Transverse colon (tissue), 4 donors: ENCODE measurements at regions of chr11 and their contacts with region 1.

Region 1: DNA sequence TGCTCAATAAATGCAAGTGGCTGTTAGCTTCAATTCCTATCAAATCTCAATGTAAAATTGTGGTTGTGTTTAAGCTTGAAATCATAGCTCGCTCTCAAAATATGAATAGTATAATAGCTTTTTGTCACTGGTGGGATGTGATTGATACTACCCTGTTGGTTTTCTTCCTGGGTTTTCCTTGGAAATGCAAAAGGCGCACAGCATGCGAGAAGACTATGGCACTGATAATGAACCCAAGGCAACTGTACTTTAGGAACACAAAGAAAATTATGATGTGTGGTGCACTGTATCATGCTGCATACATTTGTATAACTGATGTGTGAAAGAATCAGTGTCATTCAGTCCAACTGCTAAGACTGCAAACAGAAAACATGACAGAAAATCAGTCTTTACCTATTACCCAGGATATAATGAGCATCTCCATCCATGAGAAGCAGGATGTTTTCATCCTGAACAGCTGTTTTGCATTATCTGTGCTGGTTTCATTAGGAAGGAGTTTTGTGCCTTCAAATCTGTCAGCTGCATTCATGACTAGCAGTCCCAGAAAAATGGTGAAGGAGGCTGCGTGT is 101.2 kb downstream of the TRPC6 start:
- DNase-seq: no peak
- H3K4me3 ChIP-seq: no peak overlapping the region
- H3K27ac ChIP-seq: no peak overlapping the region
- H3K4me1 ChIP-seq: no peaks in the 10 kb centered on the region
- H3K27me3 ChIP-seq: no peaks in the 10 kb centered on the region
- CTCF ChIP-seq: no peak
- EP300 ChIP-seq: no peak
- POLR2A ChIP-seq: no peak

Region 2: GRCh38 chr11:99592266-99592665 is 1890.4 kb before region 1 on chr11:
- in situ Hi-C with region 1: no loop called
- intact Hi-C with region 1: no loop called
- DNase-seq: no peak
- H3K4me3 ChIP-seq: no peak overlapping the region
- H3K27ac ChIP-seq: no peak overlapping the region
- H3K4me1 ChIP-seq: no peaks in the 10 kb centered on the region
- H3K27me3 ChIP-seq: no peaks in the 10 kb centered on the region
- CTCF ChIP-seq: no peak
- EP300 ChIP-seq: no peak
- POLR2A ChIP-seq: no peak

Region 3: GRCh38 chr11:102788334-102788995 is 1305.8 kb after region 1 on chr11:
- in situ Hi-C with region 1: no loop called
- intact Hi-C with region 1: loop called (anchors 5 kb)
- DNase-seq: no peak
- H3K4me3 ChIP-seq: no peak overlapping the region
- H3K27ac ChIP-seq: no peak overlapping the region
- H3K4me1 ChIP-seq: no peaks in the 10 kb centered on the region
- H3K27me3 ChIP-seq: no peaks in the 10 kb centered on the region
- CTCF ChIP-seq: no peak
- EP300 ChIP-seq: no peak
- POLR2A ChIP-seq: no peak